ENCODE measurements at regions of chr12 and their contacts with region 1.

Region 1: DNA sequence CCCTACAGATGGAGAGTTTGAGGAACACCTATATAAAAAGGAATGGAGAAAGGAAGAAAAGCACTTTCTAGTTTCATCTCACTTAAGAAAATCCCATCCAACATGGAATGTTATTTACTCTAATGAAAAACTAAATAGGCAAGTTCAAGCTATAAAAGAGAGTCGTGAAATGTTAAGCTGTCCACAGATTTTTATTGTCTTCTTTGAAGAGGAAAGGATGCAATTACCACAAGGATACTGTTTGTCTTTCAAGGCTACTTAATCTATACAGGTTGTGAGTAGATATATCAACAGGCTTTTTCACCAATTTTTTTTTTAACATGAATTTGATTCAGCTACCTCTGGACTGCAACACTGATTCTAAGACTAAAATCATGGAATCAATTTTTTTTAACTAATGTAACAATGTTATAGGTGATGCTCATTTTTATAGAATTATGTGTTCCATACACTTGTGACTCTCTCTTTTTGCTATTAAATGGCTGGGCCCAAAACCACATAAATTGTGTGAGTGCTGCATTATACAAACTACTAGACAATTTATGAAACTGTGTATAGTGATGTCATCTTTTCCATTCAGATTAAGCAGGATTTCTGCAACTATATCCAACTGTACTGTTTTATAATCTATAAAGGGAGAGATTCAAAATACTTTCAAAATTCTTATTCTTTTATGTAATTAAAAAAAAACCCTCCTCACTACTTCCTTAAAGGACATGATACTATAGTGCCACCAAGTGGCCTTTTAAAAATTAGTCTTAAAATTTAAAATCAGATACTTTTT is 26.8 kb upstream of the BMAL2 start:
- DNase-seq: peak; percentile 57
- H3K4me3 ChIP-seq: no peak overlapping the region
- H3K27ac ChIP-seq: no peak overlapping the region
- H3K4me1 ChIP-seq: no peaks in the 10 kb centered on the region
- CTCF ChIP-seq: peak; percentile 89

Region 2: DNA sequence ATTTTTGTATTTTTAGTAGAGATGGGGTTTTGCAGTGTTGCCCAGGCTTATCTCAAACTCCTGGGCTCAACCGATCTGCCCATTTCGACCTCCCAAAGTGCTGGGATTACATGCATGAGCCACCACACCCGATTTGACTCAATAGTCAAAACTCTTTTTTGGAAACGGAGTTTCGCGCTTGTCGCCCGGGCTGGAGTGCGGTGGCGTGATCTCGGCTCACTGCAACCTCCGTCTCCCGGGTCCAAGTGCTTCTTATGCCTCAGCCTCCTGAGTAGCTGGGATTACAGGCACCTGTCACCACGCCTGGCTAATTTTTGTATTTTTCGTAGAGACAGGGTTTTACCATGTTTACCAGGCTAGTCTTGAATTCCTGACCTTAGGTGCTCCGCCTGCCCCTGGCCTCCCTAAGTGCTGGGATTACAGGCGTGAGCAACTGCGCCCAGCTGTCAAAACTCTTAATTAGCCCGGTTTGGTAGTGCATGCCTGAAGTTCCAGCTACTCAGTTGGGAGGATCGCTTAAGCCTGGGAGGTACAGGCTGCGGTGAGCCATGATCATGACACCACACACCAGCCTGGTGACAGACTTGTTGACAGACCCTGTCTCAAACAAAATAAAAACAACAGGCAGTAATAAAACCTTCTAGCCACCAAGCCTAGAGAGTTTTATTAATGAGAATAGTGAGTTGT is 271.1 kb before region 1 on chr12:
- CTCF ChIA-PET with region 1: no interaction called
- POLR2A ChIA-PET with region 1: no interaction called
- intact Hi-C with region 1: loop called (anchors 5 kb)
- DNase-seq: no peak
- H3K4me3 ChIP-seq: no peak overlapping the region
- H3K27ac ChIP-seq: no peak overlapping the region
- H3K4me1 ChIP-seq: no peaks in the 10 kb centered on the region
- CTCF ChIP-seq: no peak

Region 3: GRCh38 chr12:27142101-27142721 is 163.7 kb before region 1 on chr12:
- CTCF ChIA-PET with region 1: no interaction called
- POLR2A ChIA-PET with region 1: no interaction called
- intact Hi-C with region 1: loop called (anchors 2 kb)
- DNase-seq: peak; percentile 57
- H3K4me3 ChIP-seq: no peak overlapping the region
- H3K27ac ChIP-seq: no peak overlapping the region
- H3K4me1 ChIP-seq: no peaks in the 10 kb centered on the region
- CTCF ChIP-seq: peak; percentile 97

Region 4: GRCh38 chr12:27220057-27220987 is 85.5 kb before region 1 on chr12:
- CTCF ChIA-PET with region 1: no interaction called
- POLR2A ChIA-PET with region 1: interaction called, 3 read pairs
- intact Hi-C with region 1: loop called (anchors 5 kb)
- DNase-seq: peak; percentile 27
- H3K4me3 ChIP-seq: no peak overlapping the region
- H3K27ac ChIP-seq: no peak overlapping the region
- H3K4me1 ChIP-seq: peaks cover 25% of the 10 kb centered on the region
- CTCF ChIP-seq: no peak

Region 5: DNA sequence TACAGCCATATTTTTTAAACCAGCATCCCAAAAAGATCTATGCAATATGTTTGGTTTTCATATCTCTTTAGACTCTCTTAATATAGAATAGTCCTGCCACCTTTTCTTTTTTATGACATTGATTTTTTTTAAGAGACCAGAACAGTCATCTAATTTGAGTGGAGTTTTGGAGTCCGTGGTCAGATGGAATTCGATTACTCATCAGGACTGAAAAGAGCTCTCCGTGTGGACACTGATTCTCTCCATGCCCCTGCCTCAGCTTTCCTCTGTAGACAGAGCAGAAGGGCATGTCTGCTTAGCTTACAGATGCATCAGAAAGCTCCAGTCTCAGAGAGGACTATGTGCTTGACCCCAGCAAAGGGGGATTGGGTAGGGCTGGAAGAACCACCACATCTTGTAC is 168.5 kb after region 1 on chr12:
- CTCF ChIA-PET with region 1: no interaction called
- POLR2A ChIA-PET with region 1: no interaction called
- intact Hi-C with region 1: no loop called
- DNase-seq: no peak
- H3K4me3 ChIP-seq: no peak overlapping the region
- H3K27ac ChIP-seq: no peak overlapping the region
- H3K4me1 ChIP-seq: no peaks in the 10 kb centered on the region
- CTCF ChIP-seq: no peak

Region 6: GRCh38 chr12:27696864-27697564 is 391.1 kb after region 1 on chr12:
- CTCF ChIA-PET with region 1: no interaction called
- POLR2A ChIA-PET with region 1: no interaction called
- intact Hi-C with region 1: no loop called
- DNase-seq: no peak
- H3K4me3 ChIP-seq: no peak overlapping the region
- H3K27ac ChIP-seq: no peak overlapping the region
- H3K4me1 ChIP-seq: no peaks in the 10 kb centered on the region
- CTCF ChIP-seq: no peak